Left ventricle myocardium superior (tissue), 1 donor: ENCODE measurements at regions of chr6 and their contacts with region 1.

Region 1: GRCh38 chr6:75210885-75211739 is 5.3 kb upstream of the COL12A1 start:
- DNase-seq: no peak
- ATAC-seq: no peak

Region 2: GRCh38 chr6:73739096-73739495 is 1472.0 kb before region 1 on chr6:
- intact Hi-C with region 1: loop called (anchors 5 kb)
- DNase-seq: no peak
- ATAC-seq: peak; percentile 70